ENCODE measurements at regions of chr5 and their contacts with region 1.

Region 1: DNA sequence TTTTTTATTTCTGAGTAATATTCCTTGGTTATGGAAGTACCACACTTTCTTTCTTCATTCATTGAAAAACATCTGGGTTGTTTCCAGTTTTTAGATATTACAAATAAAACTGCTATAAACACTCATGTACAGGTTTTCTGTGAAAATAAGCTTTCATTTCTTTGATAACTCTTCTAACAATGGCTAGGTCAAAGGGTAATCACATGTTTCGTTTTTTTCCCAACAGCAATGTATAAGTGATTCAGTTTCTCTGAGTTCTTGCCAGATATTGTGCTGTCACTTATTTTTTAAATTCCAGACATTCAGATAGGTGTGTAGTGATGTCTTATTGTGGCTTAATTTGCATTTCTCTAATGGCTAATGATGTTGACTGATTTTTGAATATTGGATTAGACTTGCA is 16.7 kb upstream of the TNPO1 start:
- DNase-seq: no peak
- ATAC-seq: no peak
- H3K4me3 ChIP-seq: no peak overlapping the region
- H3K27ac ChIP-seq: no peak overlapping the region
- H3K4me1 ChIP-seq: no peaks in the 10 kb centered on the region
- H3K27me3 ChIP-seq: no peaks in the 10 kb centered on the region; the same call in 1 of the 2 replicates
- CTCF ChIP-seq: no peak

Region 2: GRCh38 chr5:72378636-72379290 is 421.0 kb before region 1 on chr5:
- CTCF ChIA-PET with region 1: no interaction called
- POLR2A ChIA-PET with region 1: interaction called, 15 read pairs
- in situ Hi-C with region 1: no loop called
- intact Hi-C with region 1: no loop called
- DNase-seq: no peak
- ATAC-seq: 0 out of 2 replicates have a peak, but pooled peaks have one; percentile 39
- H3K4me3 ChIP-seq: no peak overlapping the region
- H3K27ac ChIP-seq: no peak overlapping the region
- H3K4me1 ChIP-seq: no peaks in the 10 kb centered on the region
- H3K27me3 ChIP-seq: no peaks in the 10 kb centered on the region
- CTCF ChIP-seq: no peak

Region 3: DNA sequence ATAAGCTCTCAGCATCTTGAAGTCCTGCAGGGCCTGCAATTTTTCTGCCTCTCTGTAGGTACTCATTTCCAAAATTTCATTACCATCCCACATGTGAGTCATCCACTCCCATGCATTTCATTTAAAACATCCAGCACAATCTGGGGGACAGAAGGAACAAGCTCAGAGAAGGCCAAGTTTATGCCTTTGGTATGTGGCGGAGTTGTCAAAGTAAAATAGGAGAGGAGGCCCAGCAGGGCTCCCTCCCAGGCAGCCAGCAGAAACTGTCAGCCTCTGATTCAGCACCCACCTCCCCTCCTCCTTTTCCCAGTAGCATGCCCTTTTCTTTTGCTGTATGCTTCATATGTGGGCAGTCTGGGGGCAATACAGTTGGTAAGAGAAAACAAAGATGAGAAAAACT is 166.1 kb before region 1 on chr5:
- CTCF ChIA-PET with region 1: no interaction called
- POLR2A ChIA-PET with region 1: no interaction called
- in situ Hi-C with region 1: no loop called
- intact Hi-C with region 1: no loop called
- DNase-seq: no peak
- ATAC-seq: no peak
- H3K4me3 ChIP-seq: no peak overlapping the region
- H3K27ac ChIP-seq: no peak overlapping the region
- H3K4me1 ChIP-seq: no peaks in the 10 kb centered on the region
- H3K27me3 ChIP-seq: no peaks in the 10 kb centered on the region
- CTCF ChIP-seq: no peak

Region 4: GRCh38 chr5:73370640-73371583 is 571.2 kb after region 1 on chr5:
- CTCF ChIA-PET with region 1: no interaction called
- POLR2A ChIA-PET with region 1: no interaction called
- in situ Hi-C with region 1: no loop called
- intact Hi-C with region 1: no loop called
- DNase-seq: peak; percentile 98
- ATAC-seq: peak; percentile 90
- H3K4me3 ChIP-seq: peak overlapping the region in 1 of 2 experiments; percentile 42; a peak in 2 of 4 replicates
- H3K27ac ChIP-seq: peak overlapping the region; percentile 93
- H3K4me1 ChIP-seq: peaks cover 68% of the 10 kb centered on the region
- H3K27me3 ChIP-seq: no peaks in the 10 kb centered on the region
- CTCF ChIP-seq: no peak